IMR-90 (cell line): ENCODE measurements at regions of chr11 and their contacts with region 1.

Region 1: GRCh38 chr11:8263769-8264410 is at the start of gene LMO1:
- DNase-seq: peak; percentile 62
- ATAC-seq: peak; percentile 81
- H3K4me3 ChIP-seq: peak within 1 kb of the TSS; percentile 27
- H3K27ac ChIP-seq: no peak within 1 kb of the TSS
- H3K4me1 ChIP-seq: no peaks in the 10 kb centered on the region; the same call in 1 of the 2 replicates
- H3K27me3 ChIP-seq: peaks cover 84% of the 10 kb centered on the region
- CTCF ChIP-seq: peak; percentile 77
- POLR2A ChIP-seq: no peak
- RAD21 ChIP-seq: peak; percentile 58
- total RNA-seq, gene LMO1: not detected in 2 replicates

Region 2: GRCh38 chr11:8192016-8192895 is 71.6 kb before region 1 on chr11:
- CTCF ChIA-PET with region 1: interaction called, 3 read pairs
- POLR2A ChIA-PET with region 1: no interaction called
- dilution Hi-C with region 1: no loop called
- in situ Hi-C with region 1: no loop called
- intact Hi-C with region 1: loop called (anchors 1 kb)
- DNase-seq: peak; percentile 63
- ATAC-seq: peak; percentile 98
- H3K4me3 ChIP-seq: no peak overlapping the region
- H3K27ac ChIP-seq: no peak overlapping the region
- H3K4me1 ChIP-seq: no peaks in the 10 kb centered on the region
- H3K27me3 ChIP-seq: peaks cover 13% of the 10 kb centered on the region
- CTCF ChIP-seq: peak; percentile 82
- POLR2A ChIP-seq: no peak
- RAD21 ChIP-seq: peak; percentile 73